Left colon (tissue), 2 donors: ENCODE measurements at regions of chr15 and their contacts with region 1.

Region 1: DNA sequence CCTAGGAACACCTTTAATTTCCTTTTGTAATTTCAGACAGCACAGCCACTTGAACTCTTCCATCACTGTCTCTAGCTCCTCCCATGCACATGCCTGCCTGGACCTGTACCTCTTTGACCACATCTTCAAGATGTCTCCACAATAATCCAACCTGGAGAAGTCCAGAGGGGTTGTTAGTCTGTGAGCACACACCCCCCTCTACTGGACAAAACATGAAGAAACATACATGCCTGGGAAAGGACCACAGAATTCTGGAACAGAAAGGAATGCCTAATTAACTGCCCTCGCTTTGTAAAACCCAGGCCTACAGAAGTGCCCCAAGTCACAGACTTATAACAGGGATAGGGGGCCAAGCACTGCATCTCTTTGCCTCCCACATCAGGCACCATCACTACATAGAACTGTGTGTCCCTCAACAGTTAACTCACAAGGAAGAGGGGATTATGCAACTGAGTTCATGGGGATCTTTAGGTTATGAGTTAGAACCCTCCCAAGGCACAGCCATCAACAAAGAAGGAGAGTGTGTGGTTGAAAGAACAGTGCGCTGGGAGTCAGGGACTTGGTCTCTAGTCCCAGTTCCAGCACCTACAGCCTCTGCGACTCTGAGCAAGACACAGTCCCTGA is 61.7 kb downstream of the FMN1 start:
- DNase-seq: no peak
- ATAC-seq: peak; percentile 90

Region 2: GRCh38 chr15:33055962-33056361 is 76.9 kb before region 1 on chr15:
- intact Hi-C with region 1: no loop called
- DNase-seq: no peak
- ATAC-seq: no peak

Region 3: GRCh38 chr15:33086507-33087121 is 46.2 kb before region 1 on chr15:
- intact Hi-C with region 1: loop called in 1 of 2 experiments (anchors 5 kb)
- DNase-seq: no peak
- ATAC-seq: peak; percentile 31

Region 4: GRCh38 chr15:33402600-33402999 is 269.8 kb after region 1 on chr15:
- intact Hi-C with region 1: no loop called
- DNase-seq: no peak
- ATAC-seq: no peak